Endothelial cell of umbilical vein (primary cell): ENCODE measurements at regions of chr10 and their contacts with region 1.

Region 1: GRCh38 chr10:112361951-112362751 is 11.8 kb upstream of the ACSL5 start:
- DNase-seq: peak; percentile 93
- H3K4me3 ChIP-seq: no peak overlapping the region
- H3K27ac ChIP-seq: peak overlapping the region; percentile 56
- H3K4me1 ChIP-seq: peaks cover 28% of the 10 kb centered on the region
- H3K27me3 ChIP-seq: no peaks in the 10 kb centered on the region
- CTCF ChIP-seq: peak in 1 of 2 donors; percentile 7
- POLR2A ChIP-seq: no peak

Region 2: GRCh38 chr10:112375721-112376395 is 13.7 kb after region 1 on chr10:
- CTCF ChIA-PET with region 1: interaction called, 13 read pairs
- POLR2A ChIA-PET with region 1: no interaction called
- dilution Hi-C with region 1: no loop called
- intact Hi-C with region 1: loop called (anchors 1 kb)
- DNase-seq: peak; percentile 45
- H3K4me3 ChIP-seq: no peak overlapping the region
- H3K27ac ChIP-seq: no peak overlapping the region
- H3K4me1 ChIP-seq: peaks cover 28% of the 10 kb centered on the region
- H3K27me3 ChIP-seq: no peaks in the 10 kb centered on the region
- CTCF ChIP-seq: no peak
- POLR2A ChIP-seq: no peak

Region 3: GRCh38 chr10:112389147-112389822 is 27.1 kb after region 1 on chr10:
- CTCF ChIA-PET with region 1: interaction called, 6 read pairs
- POLR2A ChIA-PET with region 1: interaction called, 6 read pairs
- dilution Hi-C with region 1: no loop called
- intact Hi-C with region 1: loop called (anchors 1 kb)
- DNase-seq: peak; percentile 85
- H3K4me3 ChIP-seq: no peak overlapping the region
- H3K27ac ChIP-seq: peak overlapping the region; percentile 85
- H3K4me1 ChIP-seq: peaks cover 18% of the 10 kb centered on the region
- H3K27me3 ChIP-seq: peaks cover 2 to 4% of the 10 kb centered on the region in 2 experiments
- CTCF ChIP-seq: no peak
- POLR2A ChIP-seq: no peak

Region 4: DNA sequence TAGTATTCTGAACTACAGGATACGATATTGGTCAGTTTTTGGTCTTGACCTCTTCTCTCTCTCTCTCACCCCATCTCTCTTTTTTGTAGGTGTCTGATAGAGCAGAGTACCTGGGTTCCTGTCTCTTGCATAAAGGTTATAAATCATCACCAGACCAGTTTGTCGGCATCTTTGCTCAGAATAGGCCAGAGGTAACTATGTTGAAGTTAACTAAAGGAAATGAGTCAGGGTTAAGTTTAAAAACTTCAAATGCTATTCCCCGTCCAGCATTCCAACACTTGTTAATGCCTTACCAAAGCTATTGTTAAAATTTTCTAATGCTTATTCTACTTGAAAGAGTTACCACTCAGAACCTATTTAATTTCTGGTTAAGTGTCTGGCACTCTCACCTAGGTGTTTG is 42.5 kb after region 1 on chr10:
- CTCF ChIA-PET with region 1: no interaction called
- POLR2A ChIA-PET with region 1: no interaction called
- dilution Hi-C with region 1: no loop called
- intact Hi-C with region 1: no loop called
- DNase-seq: peak; percentile 29
- H3K4me3 ChIP-seq: no peak overlapping the region
- H3K27ac ChIP-seq: no peak overlapping the region
- H3K4me1 ChIP-seq: peaks cover 10% of the 10 kb centered on the region
- H3K27me3 ChIP-seq: no peaks in the 10 kb centered on the region
- CTCF ChIP-seq: no peak
- POLR2A ChIP-seq: no peak

Region 5: GRCh38 chr10:112446855-112447711 is 84.9 kb after region 1 on chr10 and contains the starts of genes VTI1A and ZDHHC6:
- CTCF ChIA-PET with region 1: no interaction called
- POLR2A ChIA-PET with region 1: no interaction called
- dilution Hi-C with region 1: no loop called
- intact Hi-C with region 1: loop called (anchors 1 kb)
- DNase-seq: peak; percentile 79
- H3K4me3 ChIP-seq: peak within 1 kb of the TSS; percentile 89 to 98 (median 96)
- H3K27ac ChIP-seq: peak within 1 kb of the TSS; percentile 94
- H3K4me1 ChIP-seq: peaks cover 18% of the 10 kb centered on the region
- H3K27me3 ChIP-seq: no peaks in the 10 kb centered on the region
- CTCF ChIP-seq: peak in 1 of 2 donors; percentile 36
- POLR2A ChIP-seq: peak; percentile 91
- total RNA-seq, gene VTI1A: 35.6 and 36.8 TPM in 2 replicates
- total RNA-seq, gene ZDHHC6: 41.9 and 42.1 TPM in 2 replicates